ENCODE measurements at regions of chr5 and their contacts with region 1.

Region 1: DNA sequence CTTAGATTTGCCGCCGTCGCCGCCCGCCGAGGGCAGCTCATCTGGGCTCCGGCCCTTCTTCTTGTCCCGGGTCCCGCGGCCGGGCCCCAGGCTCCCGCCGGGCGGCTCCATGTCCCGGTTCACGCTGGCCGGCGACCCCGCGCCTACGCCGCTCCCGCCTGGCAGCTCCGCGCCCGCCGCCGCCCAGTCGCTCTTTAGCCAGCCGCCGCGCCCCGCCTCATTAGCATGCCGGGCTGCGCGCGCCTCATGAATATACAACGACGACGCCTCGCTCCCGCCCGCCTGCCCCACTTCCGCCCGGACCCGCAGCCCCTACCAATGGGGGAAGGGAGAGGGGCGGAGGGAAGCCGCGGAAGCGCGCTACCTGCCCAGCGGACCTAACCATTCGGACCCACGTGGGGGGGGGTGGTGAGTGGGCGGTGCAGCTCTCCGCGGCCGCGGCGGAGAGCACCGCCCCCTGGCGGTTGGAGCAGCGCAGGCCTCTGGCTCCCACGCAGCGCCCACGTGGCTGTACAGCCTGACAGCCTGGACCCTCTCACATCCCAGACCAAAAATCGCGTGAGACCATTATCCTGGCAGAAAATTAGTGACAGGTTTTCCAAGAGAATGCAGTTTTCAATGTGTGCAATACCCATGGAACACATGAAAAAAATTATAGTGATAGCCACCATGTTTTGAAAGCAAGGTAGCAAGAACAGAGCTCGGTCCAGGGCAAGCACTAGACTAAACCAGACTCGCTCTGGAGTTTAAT is at the start of gene DIAPH1:
- DNase-seq: peak; percentile 92
- ATAC-seq: peak; percentile 94
- H3K4me3 ChIP-seq: peak within 1 kb of the TSS; percentile 84 to 95 (median 88)
- H3K27ac ChIP-seq: peak within 1 kb of the TSS; percentile 87
- H3K4me1 ChIP-seq: peaks cover 45% of the 10 kb centered on the region
- H3K27me3 ChIP-seq: no peaks in the 10 kb centered on the region
- CTCF ChIP-seq: peak; percentile 98
- EP300 ChIP-seq: peak; percentile 32 to 50; a peak in 2 of 4 replicates
- POLR2A ChIP-seq: peak; percentile 43 to 84
- RAD21 ChIP-seq: peak; percentile 99
- total RNA-seq, gene DIAPH1: 28.5 and 33.9 TPM in 2 replicates

Region 2: GRCh38 chr5:141574122-141574510 is 44.9 kb before region 1 on chr5:
- CTCF ChIA-PET with region 1: no interaction called
- POLR2A ChIA-PET with region 1: no interaction called
- in situ Hi-C with region 1: no loop called
- intact Hi-C with region 1: no loop called
- DNase-seq: no peak
- ATAC-seq: no peak
- H3K4me3 ChIP-seq: no peak overlapping the region
- H3K27ac ChIP-seq: no peak overlapping the region
- H3K4me1 ChIP-seq: no peaks in the 10 kb centered on the region
- H3K27me3 ChIP-seq: no peaks in the 10 kb centered on the region
- CTCF ChIP-seq: no peak
- EP300 ChIP-seq: no peak
- POLR2A ChIP-seq: no peak
- RAD21 ChIP-seq: no peak

Region 3: GRCh38 chr5:141590127-141590526 is 28.9 kb before region 1 on chr5:
- CTCF ChIA-PET with region 1: interaction called, 67 read pairs
- POLR2A ChIA-PET with region 1: interaction called, 53 read pairs
- in situ Hi-C with region 1: no loop called
- intact Hi-C with region 1: loop called (anchors 1 kb)
- DNase-seq: peak; percentile 83
- ATAC-seq: peak; percentile 81
- H3K4me3 ChIP-seq: no peak overlapping the region; a peak in 1 of 6 replicates
- H3K27ac ChIP-seq: peak overlapping the region; percentile 84
- H3K4me1 ChIP-seq: peaks cover 43% of the 10 kb centered on the region
- H3K27me3 ChIP-seq: no peaks in the 10 kb centered on the region
- CTCF ChIP-seq: no peak
- EP300 ChIP-seq: peak in 1 of 2 experiments; percentile 80; a peak in 2 of 4 replicates
- POLR2A ChIP-seq: no peak
- RAD21 ChIP-seq: no peak

Region 4: GRCh38 chr5:141597394-141597793 is 21.6 kb before region 1 on chr5:
- CTCF ChIA-PET with region 1: interaction called, 67 read pairs
- POLR2A ChIA-PET with region 1: interaction called, 53 read pairs
- in situ Hi-C with region 1: no loop called
- intact Hi-C with region 1: loop called (anchors 1 kb)
- DNase-seq: no peak
- ATAC-seq: no peak
- H3K4me3 ChIP-seq: no peak overlapping the region
- H3K27ac ChIP-seq: no peak overlapping the region
- H3K4me1 ChIP-seq: peaks cover 35% of the 10 kb centered on the region
- H3K27me3 ChIP-seq: no peaks in the 10 kb centered on the region
- CTCF ChIP-seq: no peak
- EP300 ChIP-seq: no peak
- POLR2A ChIP-seq: no peak
- RAD21 ChIP-seq: no peak

Region 5: GRCh38 chr5:141608557-141608956 is 10.4 kb before region 1 on chr5:
- CTCF ChIA-PET with region 1: no interaction called
- POLR2A ChIA-PET with region 1: interaction called, 7 read pairs
- in situ Hi-C with region 1: no loop called
- intact Hi-C with region 1: loop called (anchors 1 kb)
- DNase-seq: peak; percentile 83
- ATAC-seq: peak; percentile 97
- H3K4me3 ChIP-seq: peak overlapping the region; percentile 24 to 49 (median 43); a peak in 5 of 6 replicates
- H3K27ac ChIP-seq: peak overlapping the region; percentile 78
- H3K4me1 ChIP-seq: peaks cover 91% of the 10 kb centered on the region
- H3K27me3 ChIP-seq: no peaks in the 10 kb centered on the region
- CTCF ChIP-seq: no peak
- EP300 ChIP-seq: peak in 1 of 2 experiments; percentile 61; a peak in 2 of 4 replicates
- POLR2A ChIP-seq: no peak
- RAD21 ChIP-seq: no peak